ENCODE measurements at regions of chr5 and their contacts with region 1.

Region 1: DNA sequence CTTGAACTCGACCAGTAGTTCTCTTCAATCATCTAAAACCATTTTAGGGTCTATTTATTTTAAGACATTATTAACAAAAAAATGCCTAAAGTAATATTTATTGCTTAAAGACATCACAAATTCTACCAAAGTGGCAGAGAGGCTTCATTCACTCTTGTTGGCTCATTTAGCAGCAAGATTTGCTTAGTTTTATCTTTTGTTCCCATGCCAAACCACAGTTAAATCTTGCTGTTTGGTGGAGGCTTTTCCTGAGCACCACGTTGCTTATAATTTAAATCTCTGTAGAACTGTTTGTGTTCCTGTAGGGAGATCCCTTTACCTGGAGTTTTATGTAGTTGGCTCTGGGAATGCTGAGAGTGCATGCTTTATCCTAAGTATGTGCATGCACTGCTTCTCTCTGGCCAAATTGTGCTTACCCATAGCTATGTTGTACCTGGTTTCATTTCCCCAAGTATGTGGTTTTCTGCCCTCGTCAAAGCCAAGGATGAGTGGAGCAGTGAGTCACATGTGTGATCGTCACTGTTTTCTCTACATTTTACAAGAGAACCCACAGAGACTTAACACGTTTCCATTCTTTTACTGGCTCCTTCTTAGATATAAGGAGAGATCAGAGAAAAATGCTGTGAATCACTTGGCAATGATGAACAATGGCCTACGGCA is 42.1 kb upstream of the MAST4 start:
- DNase-seq: peak; percentile 80
- H3K4me3 Mint-ChIP-seq: no peak overlapping the region
- H3K27ac Mint-ChIP-seq: peak overlapping the region; percentile 27
- H3K4me1 Mint-ChIP-seq: peaks cover 29% of the 10 kb centered on the region
- H3K27me3 Mint-ChIP-seq: no peaks in the 10 kb centered on the region

Region 2: DNA sequence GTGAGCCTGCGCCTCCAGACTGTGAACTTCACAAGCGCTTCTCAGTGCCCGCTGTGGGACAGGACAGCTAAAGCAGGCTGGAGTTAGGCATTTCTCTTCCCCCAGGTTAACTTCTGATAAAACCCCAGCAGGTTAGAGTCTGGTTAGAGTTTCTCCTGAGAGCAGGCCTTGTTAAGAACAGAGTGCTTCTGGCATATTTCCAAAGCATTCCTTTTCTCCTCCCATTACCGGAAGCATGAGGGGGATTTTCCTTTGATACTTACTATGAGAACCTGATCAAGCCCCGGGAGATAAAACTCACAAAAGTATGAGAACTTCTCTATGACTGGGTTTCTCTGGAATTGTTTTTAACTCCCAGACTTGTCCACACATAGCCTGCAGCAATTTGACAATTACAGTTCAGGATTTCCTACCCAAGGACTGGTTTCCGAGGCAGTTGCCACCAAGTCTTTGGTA is 35.3 kb before region 1 on chr5:
- intact Hi-C with region 1: loop called (anchors 2 kb)
- DNase-seq: no peak
- H3K4me3 Mint-ChIP-seq: no peak overlapping the region
- H3K27ac Mint-ChIP-seq: no peak overlapping the region
- H3K4me1 Mint-ChIP-seq: no peaks in the 10 kb centered on the region
- H3K27me3 Mint-ChIP-seq: peaks cover 9% of the 10 kb centered on the region

Region 3: GRCh38 chr5:66540078-66540477 is 14.0 kb before region 1 on chr5:
- intact Hi-C with region 1: loop called (anchors 1 kb)
- DNase-seq: peak; percentile 41
- H3K4me3 Mint-ChIP-seq: no peak overlapping the region
- H3K27ac Mint-ChIP-seq: no peak overlapping the region
- H3K4me1 Mint-ChIP-seq: peaks cover 9% of the 10 kb centered on the region
- H3K27me3 Mint-ChIP-seq: no peaks in the 10 kb centered on the region

Region 4: DNA sequence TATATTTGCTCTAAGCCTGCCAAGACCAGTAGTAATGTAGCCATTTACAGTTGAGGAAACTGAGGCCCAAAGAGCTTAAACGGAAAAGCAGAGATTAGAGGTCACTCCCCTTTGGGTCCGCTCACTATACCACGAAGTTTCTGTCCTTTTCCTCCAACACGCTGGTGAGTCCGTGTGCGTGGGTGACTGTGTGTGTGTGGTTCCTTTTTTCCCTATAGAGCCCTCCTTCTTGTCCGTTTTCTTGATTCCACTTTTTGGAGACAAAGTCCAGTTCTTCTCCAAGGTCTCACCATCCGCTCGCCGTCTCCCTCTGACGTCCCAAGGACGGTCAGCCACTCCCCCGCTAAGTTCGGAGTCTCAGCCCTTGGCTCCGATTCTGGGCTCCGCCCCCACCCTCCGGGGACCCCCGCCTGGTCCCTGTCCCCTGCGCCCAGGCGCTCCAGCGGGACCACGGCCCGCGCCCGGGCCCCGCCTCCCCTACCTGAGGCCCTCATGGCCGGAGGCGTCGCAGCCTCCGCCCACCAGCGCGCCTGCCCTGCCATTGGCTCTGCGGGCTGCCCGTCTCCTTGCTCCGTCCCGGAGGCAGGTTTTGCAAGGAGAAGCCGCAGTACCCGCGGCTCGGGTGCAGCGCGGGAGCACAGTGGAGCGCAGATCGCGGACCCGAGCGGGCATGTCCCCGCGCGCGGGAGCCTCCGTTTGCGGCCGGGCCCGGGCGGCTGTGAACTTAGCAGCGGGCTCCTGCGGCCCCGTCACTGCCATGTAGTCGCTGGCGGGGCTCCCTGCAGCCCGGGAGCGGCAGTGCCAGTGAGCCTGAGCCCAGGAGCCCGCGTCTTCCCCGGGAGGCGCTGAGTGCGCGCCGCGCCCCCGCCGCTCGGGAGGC is 42.0 kb after region 1 on chr5 and contains the start of gene MAST4:
- intact Hi-C with region 1: loop called (anchors 5 kb)
- DNase-seq: peak; percentile 94
- H3K4me3 Mint-ChIP-seq: peak within 1 kb of the TSS; percentile 88
- H3K27ac Mint-ChIP-seq: peak within 1 kb of the TSS; percentile 2
- H3K4me1 Mint-ChIP-seq: peaks cover 25% of the 10 kb centered on the region
- H3K27me3 Mint-ChIP-seq: peaks cover 71% of the 10 kb centered on the region
- total RNA-seq, gene MAST4: 16.1 and 18.3 TPM in 2 replicates

Region 5: DNA sequence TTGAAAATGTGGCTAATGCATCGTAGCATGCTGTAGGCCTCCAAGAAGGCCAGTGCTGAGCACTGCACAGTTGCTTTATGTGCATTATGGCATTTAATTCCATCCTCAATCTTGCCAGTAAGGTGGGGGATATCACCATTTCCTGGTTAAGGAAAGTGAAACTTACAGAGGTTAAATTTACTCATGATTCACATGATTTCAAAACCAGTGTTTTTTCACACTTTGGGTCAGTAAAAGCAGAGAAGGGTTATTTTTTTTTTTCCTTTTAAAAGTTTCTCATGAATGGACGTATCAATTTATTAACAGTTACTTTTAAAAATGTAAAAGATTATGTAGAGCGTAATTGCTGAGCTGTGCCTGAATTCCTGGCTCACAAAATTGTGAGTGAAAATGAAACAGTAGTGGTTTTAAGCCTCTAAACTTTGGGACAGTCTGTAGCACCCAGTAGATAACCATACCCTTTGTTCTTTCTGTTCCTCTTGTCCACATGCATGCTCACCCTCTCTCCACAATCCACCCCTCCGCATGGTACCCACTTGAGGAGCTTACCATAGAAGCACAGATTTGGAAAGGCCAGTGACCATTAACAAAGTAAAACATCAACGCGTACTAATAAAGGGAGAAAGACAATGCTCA is 63.3 kb after region 1 on chr5:
- intact Hi-C with region 1: loop called (anchors 1 kb)
- DNase-seq: no peak
- H3K4me3 Mint-ChIP-seq: peak overlapping the region; percentile 67
- H3K27ac Mint-ChIP-seq: peak overlapping the region; percentile 70
- H3K4me1 Mint-ChIP-seq: peaks cover 28% of the 10 kb centered on the region
- H3K27me3 Mint-ChIP-seq: peaks cover 9% of the 10 kb centered on the region

Region 6: DNA sequence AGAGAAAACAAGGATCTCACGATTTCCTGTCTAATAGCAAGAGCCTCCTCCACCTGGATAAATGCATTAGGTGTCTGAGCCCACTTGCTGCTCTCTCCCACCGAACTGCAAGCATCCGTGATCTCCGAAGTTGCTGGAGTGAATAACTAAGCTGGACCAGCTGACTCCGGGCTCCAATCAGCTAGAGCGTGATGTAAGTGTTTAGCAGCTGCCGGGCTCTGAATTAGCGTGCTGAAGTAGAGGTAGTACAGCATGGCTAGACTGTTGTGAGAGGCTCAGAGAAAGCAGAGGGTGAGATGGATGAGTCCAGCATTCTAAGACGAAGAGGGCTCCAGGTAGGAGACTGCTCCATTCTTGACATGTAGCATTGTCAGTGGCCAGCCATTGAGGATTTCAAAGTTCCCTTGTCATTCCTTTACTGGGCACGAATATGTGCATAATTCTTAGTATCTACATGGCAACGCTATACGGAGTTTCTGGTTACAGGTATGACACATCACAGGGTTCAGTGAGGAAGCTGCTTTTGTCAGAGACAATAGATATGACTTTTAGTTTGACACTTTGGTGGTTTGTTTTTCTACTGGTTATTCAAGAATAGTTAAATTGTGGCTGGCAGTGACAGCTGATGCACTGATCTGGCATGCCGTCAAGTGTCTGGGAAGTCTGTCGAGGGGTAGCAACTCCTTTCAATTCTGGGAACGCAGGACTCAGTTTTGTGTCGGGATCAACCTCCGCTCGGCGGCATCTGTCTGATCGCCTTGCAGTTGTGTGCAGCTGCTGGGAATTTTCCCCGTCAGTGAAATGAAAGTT is 274.7 kb after region 1 on chr5:
- intact Hi-C with region 1: loop called (anchors 10 kb)
- DNase-seq: peak; percentile 92
- H3K4me3 Mint-ChIP-seq: peak overlapping the region; percentile 93
- H3K27ac Mint-ChIP-seq: peak overlapping the region; percentile 93
- H3K4me1 Mint-ChIP-seq: peaks cover 56% of the 10 kb centered on the region
- H3K27me3 Mint-ChIP-seq: no peaks in the 10 kb centered on the region

Region 7: DNA sequence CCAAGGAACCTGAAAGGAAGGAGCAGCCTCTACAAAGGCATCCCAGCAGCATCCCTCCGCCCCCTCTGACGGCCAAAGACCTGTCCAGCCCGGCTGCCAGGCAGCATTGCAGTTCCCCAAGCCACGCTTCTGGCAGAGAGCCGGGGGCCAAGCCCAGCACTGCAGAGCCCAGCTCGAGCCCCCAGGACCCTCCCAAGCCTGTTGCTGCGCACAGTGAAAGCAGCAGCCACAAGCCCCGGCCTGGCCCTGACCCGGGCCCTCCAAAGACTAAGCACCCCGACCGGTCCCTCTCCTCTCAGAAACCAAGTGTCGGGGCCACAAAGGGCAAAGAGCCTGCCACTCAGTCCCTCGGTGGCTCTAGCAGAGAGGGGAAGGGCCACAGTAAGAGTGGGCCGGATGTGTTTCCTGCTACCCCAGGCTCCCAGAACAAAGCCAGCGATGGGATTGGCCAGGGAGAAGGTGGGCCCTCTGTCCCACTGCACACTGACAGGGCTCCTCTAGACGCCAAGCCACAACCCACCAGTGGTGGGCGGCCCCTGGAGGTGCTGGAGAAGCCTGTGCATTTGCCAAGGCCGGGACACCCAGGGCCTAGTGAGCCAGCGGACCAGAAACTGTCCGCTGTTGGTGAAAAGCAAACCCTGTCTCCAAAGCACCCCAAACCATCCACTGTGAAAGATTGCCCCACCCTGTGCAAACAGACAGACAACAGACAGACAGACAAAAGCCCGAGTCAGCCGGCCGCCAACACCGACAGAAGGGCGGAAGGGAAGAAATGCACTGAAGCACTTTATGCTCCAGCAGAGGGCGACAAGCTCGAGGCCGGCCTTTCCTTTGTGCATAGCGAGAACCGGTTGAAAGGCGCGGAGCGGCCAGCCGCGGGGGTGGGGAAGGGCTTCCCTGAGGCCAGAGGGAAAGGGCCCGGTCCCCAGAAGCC is 611.7 kb after region 1 on chr5:
- intact Hi-C with region 1: loop called (anchors 10 kb)
- DNase-seq: peak; percentile 96
- H3K4me3 Mint-ChIP-seq: peak overlapping the region; percentile 89
- H3K27ac Mint-ChIP-seq: peak overlapping the region; percentile 96
- H3K4me1 Mint-ChIP-seq: peaks cover 65% of the 10 kb centered on the region
- H3K27me3 Mint-ChIP-seq: no peaks in the 10 kb centered on the region